ENCODE measurements at regions of chr2 and their contacts with region 1.

Region 1: DNA sequence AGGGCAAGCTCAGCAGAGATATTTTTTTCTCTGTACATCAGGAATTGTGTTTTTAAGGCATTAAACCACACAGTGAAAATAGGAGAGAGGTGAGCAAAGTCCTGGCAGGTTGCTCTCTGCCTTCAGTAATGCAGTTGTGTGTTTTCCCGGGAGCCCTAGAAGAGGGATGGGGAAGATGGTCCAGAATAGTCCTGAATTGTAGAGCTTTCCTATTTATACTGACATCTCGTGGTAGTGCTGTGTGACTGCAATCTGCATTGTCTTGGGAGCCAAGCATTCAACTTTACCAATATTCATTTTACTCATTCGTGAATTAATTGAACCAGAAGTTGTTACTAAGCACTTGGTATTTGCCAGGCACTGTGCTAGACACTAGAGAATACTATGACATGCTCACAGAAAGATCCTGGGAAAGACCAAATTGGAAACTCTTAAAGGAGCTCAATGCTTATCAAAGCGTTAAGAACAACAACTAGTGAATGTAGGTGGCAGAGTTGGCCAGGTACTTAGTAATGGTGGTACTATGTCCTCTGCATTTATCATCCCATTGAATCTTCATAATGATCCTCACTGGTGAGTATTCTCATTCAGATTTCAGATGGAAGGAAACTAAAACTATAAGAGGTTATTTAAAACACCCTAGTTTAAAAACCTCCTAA is 214.6 kb downstream of the TRIB2 start:
- DNase-seq: peak; percentile 46
- ATAC-seq: no peak
- H3K4me3 ChIP-seq: no peak overlapping the region
- H3K4me3 Mint-ChIP-seq: no peak overlapping the region
- H3K27ac ChIP-seq: no peak overlapping the region
- H3K27ac Mint-ChIP-seq: no peak overlapping the region
- H3K4me1 ChIP-seq: peaks cover 0 to 9% of the 10 kb centered on the region in 2 donors
- H3K4me1 Mint-ChIP-seq: peaks cover 13% of the 10 kb centered on the region
- H3K27me3 ChIP-seq: no peaks in the 10 kb centered on the region
- H3K27me3 Mint-ChIP-seq: peaks cover 7% of the 10 kb centered on the region
- CTCF ChIP-seq: peak; percentile 87

Region 2: DNA sequence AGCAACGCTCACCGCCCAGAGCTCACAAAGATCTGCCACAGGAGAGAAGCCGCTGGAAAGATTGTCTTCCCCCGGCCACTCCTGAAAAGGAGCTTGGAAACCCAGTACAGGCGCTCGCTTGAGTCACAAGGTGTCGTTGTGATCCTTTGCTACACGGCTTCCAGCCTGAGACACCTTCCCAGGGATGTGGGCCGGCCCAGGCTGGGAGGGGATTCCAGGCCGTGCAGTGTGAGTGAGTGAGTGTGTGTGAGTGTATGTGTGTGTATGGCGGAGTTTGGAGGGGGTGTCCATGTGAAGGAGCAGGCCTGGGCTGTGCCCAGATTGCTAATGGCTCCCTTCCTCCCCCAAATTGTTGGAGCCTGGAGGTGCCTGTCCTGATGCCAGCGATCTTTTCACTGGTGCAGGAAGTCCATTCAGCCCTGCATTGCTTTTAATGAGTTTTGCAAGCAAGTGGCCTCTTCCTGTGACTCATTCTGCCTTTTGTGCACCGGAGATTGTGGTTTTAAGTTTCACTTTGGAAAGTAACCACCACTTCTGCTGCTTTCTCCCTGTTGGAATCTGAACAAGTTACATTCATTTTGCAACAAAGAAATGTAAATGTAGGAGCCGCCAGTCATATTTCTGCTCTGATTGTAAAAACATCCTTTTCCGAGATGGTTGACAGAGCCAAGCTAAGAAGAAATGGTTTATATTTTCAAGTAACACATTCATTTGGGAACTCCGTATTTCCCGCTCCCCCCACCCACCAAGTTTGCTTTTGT is 1101.2 kb before region 1 on chr2:
- CTCF ChIA-PET with region 1: interaction called, 109 read pairs
- POLR2A ChIA-PET with region 1: no interaction called
- intact Hi-C with region 1: loop called (anchors 1 kb)
- DNase-seq: peak; percentile 58
- ATAC-seq: peak; percentile 59
- H3K4me3 ChIP-seq: peak overlapping the region in 4 of 5 experiments; percentile 3 to 34 (median 20)
- H3K4me3 Mint-ChIP-seq: peak overlapping the region; percentile 83
- H3K27ac ChIP-seq: peak overlapping the region; percentile 40 to 64
- H3K27ac Mint-ChIP-seq: peak overlapping the region; percentile 78
- H3K4me1 ChIP-seq: peaks cover 42 to 63% of the 10 kb centered on the region in 2 donors
- H3K4me1 Mint-ChIP-seq: peaks cover 61% of the 10 kb centered on the region
- H3K27me3 ChIP-seq: no peaks in the 10 kb centered on the region
- H3K27me3 Mint-ChIP-seq: no peaks in the 10 kb centered on the region
- CTCF ChIP-seq: no peak

Region 3: GRCh38 chr2:11863513-11864328 is 1067.6 kb before region 1 on chr2:
- CTCF ChIA-PET with region 1: interaction called, 27 read pairs
- POLR2A ChIA-PET with region 1: no interaction called
- intact Hi-C with region 1: loop called (anchors 1 kb)
- DNase-seq: peak; percentile 80
- ATAC-seq: peak; percentile 73
- H3K4me3 ChIP-seq: peak overlapping the region in 3 of 5 experiments; percentile 5 to 29 (median 26)
- H3K4me3 Mint-ChIP-seq: peak overlapping the region; percentile 73
- H3K27ac ChIP-seq: no peak overlapping the region
- H3K27ac Mint-ChIP-seq: peak overlapping the region; percentile 59
- H3K4me1 ChIP-seq: peaks cover 70 to 81% of the 10 kb centered on the region in 2 donors
- H3K4me1 Mint-ChIP-seq: peaks cover 87% of the 10 kb centered on the region
- H3K27me3 ChIP-seq: no peaks in the 10 kb centered on the region
- H3K27me3 Mint-ChIP-seq: no peaks in the 10 kb centered on the region
- CTCF ChIP-seq: peak; percentile 96

Region 4: DNA sequence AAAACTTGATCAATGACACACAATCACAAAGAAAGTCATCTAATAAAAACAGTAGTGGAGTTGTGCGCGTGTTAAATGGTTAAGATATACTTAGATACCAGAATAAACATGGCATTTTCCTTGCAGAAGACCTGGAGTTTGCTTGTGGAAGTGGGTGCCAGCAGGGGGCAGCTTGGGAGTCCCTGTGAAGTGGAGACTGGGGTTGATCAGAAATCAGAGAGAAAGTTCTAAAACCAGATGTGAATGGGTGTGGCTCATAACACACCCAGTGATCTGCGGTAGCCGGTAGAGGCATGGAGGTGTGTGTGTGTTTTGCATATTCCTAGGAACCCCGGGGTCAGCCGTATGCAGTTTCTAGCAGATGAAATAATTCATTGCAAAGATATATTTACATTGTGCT is 514.7 kb before region 1 on chr2:
- CTCF ChIA-PET with region 1: interaction called, 14 read pairs
- POLR2A ChIA-PET with region 1: no interaction called
- intact Hi-C with region 1: loop called (anchors 1 kb)
- DNase-seq: peak; percentile 65
- ATAC-seq: peak; percentile 64
- H3K4me3 ChIP-seq: no peak overlapping the region
- H3K4me3 Mint-ChIP-seq: peak overlapping the region; percentile 11
- H3K27ac ChIP-seq: no peak overlapping the region
- H3K27ac Mint-ChIP-seq: no peak overlapping the region
- H3K4me1 ChIP-seq: peaks cover 16 to 24% of the 10 kb centered on the region in 2 donors
- H3K4me1 Mint-ChIP-seq: peaks cover 34% of the 10 kb centered on the region
- H3K27me3 ChIP-seq: no peaks in the 10 kb centered on the region
- H3K27me3 Mint-ChIP-seq: no peaks in the 10 kb centered on the region
- CTCF ChIP-seq: no peak

Region 5: DNA sequence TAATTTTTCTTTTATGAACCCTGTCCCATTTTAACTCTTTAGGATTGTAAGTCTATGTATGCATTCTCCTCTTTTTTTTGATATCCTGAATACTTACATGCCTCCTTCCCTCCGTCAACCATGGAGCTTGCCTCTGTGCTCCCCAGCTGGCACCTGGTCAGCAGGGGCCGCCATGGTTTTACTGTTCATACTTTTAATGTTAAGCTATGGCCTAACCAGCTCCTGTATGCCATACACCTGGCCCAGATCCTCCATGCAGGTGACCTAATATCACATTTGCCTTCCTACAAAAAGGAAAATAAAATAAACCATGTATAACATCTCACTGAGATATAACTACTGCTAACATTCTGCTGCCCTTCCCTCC is 497.7 kb before region 1 on chr2:
- CTCF ChIA-PET with region 1: interaction called, 25 read pairs
- POLR2A ChIA-PET with region 1: no interaction called
- intact Hi-C with region 1: loop called (anchors 1 kb)
- DNase-seq: no peak
- ATAC-seq: no peak
- H3K4me3 ChIP-seq: no peak overlapping the region
- H3K4me3 Mint-ChIP-seq: no peak overlapping the region
- H3K27ac ChIP-seq: no peak overlapping the region
- H3K27ac Mint-ChIP-seq: no peak overlapping the region
- H3K4me1 ChIP-seq: peaks cover 11% of the 10 kb centered on the region in 2 donors
- H3K4me1 Mint-ChIP-seq: peaks cover 17% of the 10 kb centered on the region
- H3K27me3 ChIP-seq: no peaks in the 10 kb centered on the region
- H3K27me3 Mint-ChIP-seq: no peaks in the 10 kb centered on the region
- CTCF ChIP-seq: no peak

Region 6: GRCh38 chr2:12728221-12728777 is 203.0 kb before region 1 on chr2:
- CTCF ChIA-PET with region 1: interaction called, 10 read pairs
- POLR2A ChIA-PET with region 1: no interaction called
- intact Hi-C with region 1: no loop called
- DNase-seq: peak; percentile 82
- ATAC-seq: peak; percentile 82
- H3K4me3 ChIP-seq: peak overlapping the region in 4 of 5 experiments; percentile 1 to 39 (median 12)
- H3K4me3 Mint-ChIP-seq: peak overlapping the region; percentile 65
- H3K27ac ChIP-seq: peak overlapping the region; percentile 67 to 69
- H3K27ac Mint-ChIP-seq: peak overlapping the region; percentile 80
- H3K4me1 ChIP-seq: peaks cover 64 to 70% of the 10 kb centered on the region in 2 donors
- H3K4me1 Mint-ChIP-seq: peaks cover 81% of the 10 kb centered on the region
- H3K27me3 ChIP-seq: no peaks in the 10 kb centered on the region
- H3K27me3 Mint-ChIP-seq: no peaks in the 10 kb centered on the region
- CTCF ChIP-seq: no peak

Region 7: GRCh38 chr2:12948961-12949353 is 17.6 kb after region 1 on chr2:
- CTCF ChIA-PET with region 1: interaction called, 14 read pairs
- POLR2A ChIA-PET with region 1: interaction called, 4 read pairs
- intact Hi-C with region 1: no loop called
- DNase-seq: no peak
- ATAC-seq: no peak
- H3K4me3 ChIP-seq: no peak overlapping the region
- H3K4me3 Mint-ChIP-seq: no peak overlapping the region
- H3K27ac ChIP-seq: no peak overlapping the region
- H3K27ac Mint-ChIP-seq: no peak overlapping the region
- H3K4me1 ChIP-seq: peaks cover 0 to 3% of the 10 kb centered on the region in 2 donors
- H3K4me1 Mint-ChIP-seq: peaks cover 4% of the 10 kb centered on the region
- H3K27me3 ChIP-seq: peaks cover 0 to 9% (median under 1%) of the 10 kb centered on the region in 4 experiments
- H3K27me3 Mint-ChIP-seq: peaks cover 13% of the 10 kb centered on the region
- CTCF ChIP-seq: no peak